Right ventricle myocardium inferior (tissue), 1 donor: ENCODE measurements at regions of chr7 and their contacts with region 1.

Region 1: GRCh38 chr7:66740302-66740979 is at the start of gene RABGEF1:
- DNase-seq: peak; percentile 100
- ATAC-seq: peak; percentile 98
- total RNA-seq, gene RABGEF1: 16.4 TPM

Region 2: GRCh38 chr7:66591799-66592596 is 148.4 kb before region 1 on chr7:
- intact Hi-C with region 1: loop called (anchors 10 kb)
- DNase-seq: peak; percentile 96
- ATAC-seq: peak; percentile 97

Region 3: DNA sequence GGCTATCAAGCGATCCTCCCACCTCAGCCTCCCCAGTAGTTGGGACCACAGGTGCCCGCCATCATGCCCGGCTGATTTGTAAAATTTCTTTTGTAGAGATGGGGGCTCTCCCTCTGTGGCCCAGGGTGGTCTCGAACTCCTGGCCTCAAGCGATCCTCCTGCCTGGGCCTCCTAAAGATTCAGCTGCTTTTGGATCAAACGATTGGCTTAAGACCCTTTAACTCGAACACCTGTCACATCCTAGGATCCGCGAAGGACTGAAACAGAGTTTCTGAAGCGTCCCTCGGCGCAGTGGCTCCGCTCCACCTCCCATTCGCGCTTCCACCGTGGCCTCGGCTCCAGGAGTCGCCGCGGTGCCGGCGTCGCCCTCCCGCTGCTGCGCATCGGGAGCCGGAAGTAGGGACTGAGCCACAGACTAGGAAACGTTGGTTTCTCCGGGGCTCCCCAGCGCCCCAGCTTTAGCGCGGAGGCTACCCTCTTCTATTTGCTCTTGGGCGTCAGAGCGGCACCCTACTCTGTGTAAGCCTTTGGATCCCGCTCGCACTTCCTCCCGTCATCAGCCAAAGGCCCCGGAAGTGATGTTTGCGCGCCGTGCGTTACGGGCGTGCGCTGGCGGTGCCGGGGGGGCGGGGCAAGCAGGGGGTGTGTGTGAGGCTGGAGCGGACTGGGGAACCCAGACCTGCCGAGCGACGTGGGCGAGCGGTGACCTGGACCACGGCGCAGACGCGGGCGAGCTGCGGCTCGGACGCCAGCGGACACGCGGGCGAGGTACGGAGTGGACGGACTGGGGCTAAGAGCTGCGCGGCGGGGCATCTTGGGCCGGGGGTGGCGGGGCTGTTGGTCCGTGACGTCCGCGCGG is 58.7 kb before region 1 on chr7:
- intact Hi-C with region 1: loop called (anchors 5 kb)
- DNase-seq: peak; percentile 99
- ATAC-seq: peak; percentile 99

Region 4: DNA sequence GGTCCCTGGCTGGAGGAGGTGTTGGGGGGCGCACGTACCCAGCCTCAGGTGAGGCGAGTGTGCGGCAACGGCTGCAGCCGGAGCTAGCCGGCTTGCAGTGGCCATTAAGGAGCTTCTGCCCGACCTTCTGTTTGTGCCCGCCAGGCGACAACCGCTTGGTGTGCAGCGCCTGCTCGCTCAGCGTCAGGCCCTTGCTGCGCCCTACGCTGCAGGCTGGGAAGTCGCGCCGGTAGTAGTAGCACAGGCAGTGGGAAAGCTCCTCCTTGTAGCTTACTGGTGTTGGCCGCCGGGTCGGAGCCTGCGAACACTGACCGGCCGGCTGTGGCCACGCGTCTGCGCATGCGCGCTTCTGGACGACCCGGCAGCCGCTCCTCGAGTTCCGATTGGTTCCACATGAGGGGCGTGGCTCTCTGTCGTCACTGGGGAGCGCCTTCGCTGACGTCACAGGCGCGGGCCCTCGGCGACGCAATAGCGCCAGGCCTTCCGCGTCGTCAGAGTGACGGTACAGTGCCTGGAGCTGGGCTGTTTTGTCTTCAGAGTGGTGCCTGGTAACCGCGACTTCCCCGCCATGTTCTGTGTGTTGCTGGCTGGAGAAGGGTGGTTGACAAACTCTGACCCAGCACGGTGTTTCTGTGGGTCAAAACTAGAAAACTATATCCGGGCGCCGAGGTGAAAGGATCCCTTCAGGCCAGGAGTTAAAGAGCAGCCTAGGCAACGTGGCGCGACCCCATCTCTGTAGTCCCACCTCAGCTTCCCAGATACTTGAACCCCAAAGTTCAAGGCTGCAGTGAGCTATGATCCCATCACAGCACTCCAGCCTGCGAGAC is 104.3 kb after region 1 on chr7:
- intact Hi-C with region 1: loop called (anchors 1 kb)
- DNase-seq: peak; percentile 98
- ATAC-seq: peak; percentile 98